ENCODE measurements at regions of chr10 and their contacts with region 1.

Region 1: GRCh38 chr10:89217057-89217990 is 10.2 kb upstream of the CH25H start:
- DNase-seq: peak in 3 of 5 donors; percentile 40 to 58 (median 47)
- ATAC-seq: peak in 2 of 4 donors; percentile 25 to 55
- H3K4me3 ChIP-seq: no peak overlapping the region
- H3K27ac ChIP-seq: peak overlapping the region in 10 of 12 donors; percentile 6 to 64 (median 34)
- H3K4me1 ChIP-seq: peaks cover 0 to 19% (median 7%) of the 10 kb centered on the region in 12 donors
- H3K27me3 ChIP-seq: no peaks in the 10 kb centered on the region
- CTCF ChIP-seq: peak; percentile 71 to 87 (median 81)
- POLR2A ChIP-seq: no peak

Region 2: DNA sequence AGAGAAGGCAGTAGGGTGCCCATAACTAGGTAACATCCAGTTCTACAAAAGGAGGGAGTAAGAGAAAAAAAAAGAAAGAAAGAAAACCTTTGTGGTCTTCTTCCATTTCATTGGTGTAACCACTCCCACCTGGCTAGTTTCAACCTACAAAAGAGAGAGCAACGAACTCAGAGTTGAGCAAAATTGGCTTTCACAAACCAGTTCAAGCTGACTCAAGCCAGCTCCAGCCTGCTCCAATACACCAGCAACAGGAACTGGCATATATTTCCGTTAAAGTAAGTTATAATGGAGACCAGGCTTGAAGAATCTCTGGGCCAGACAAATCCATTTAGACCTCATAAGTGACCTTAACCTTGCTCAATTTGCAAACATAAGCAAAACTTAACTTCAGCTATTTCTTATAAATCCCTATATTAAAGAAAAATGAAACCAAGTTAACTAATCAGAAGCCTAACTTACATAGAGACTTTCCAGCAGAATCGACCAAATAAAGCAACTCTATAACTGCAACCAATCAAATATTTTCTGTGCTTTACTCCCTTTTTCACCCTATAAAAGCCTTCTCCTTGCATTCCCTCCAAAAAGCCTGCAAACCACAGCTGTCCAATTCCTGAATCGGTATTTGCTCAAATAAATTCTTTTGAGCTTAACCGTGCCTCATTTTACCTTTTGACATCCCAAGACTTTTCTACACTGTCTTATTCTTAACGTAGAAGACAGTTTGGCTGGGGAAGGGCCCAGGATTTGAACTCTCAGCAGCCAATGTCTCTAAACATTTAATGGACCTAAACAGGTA is 375.8 kb before region 1 on chr10:
- intact Hi-C with region 1: loop called in 9 of 10 experiments (anchors 5 kb)
- DNase-seq: no peak
- ATAC-seq: no peak
- H3K4me3 ChIP-seq: no peak overlapping the region
- H3K27ac ChIP-seq: peak overlapping the region in 1 of 12 donors; percentile 71
- H3K4me1 ChIP-seq: peaks cover 0 to 15% (median 0%) of the 10 kb centered on the region in 12 donors
- H3K27me3 ChIP-seq: no peaks in the 10 kb centered on the region
- CTCF ChIP-seq: no peak
- POLR2A ChIP-seq: no peak

Region 3: GRCh38 chr10:88941026-88941425 is 276.3 kb before region 1 on chr10:
- intact Hi-C with region 1: loop called in 5 of 10 experiments (anchors 2 to 5 kb)
- DNase-seq: no peak
- ATAC-seq: no peak
- H3K4me3 ChIP-seq: no peak overlapping the region
- H3K27ac ChIP-seq: peak overlapping the region in 1 of 12 donors; percentile 78
- H3K4me1 ChIP-seq: peaks cover 0 to 16% (median 0%) of the 10 kb centered on the region in 12 donors
- H3K27me3 ChIP-seq: no peaks in the 10 kb centered on the region
- CTCF ChIP-seq: no peak
- POLR2A ChIP-seq: no peak

Region 4: DNA sequence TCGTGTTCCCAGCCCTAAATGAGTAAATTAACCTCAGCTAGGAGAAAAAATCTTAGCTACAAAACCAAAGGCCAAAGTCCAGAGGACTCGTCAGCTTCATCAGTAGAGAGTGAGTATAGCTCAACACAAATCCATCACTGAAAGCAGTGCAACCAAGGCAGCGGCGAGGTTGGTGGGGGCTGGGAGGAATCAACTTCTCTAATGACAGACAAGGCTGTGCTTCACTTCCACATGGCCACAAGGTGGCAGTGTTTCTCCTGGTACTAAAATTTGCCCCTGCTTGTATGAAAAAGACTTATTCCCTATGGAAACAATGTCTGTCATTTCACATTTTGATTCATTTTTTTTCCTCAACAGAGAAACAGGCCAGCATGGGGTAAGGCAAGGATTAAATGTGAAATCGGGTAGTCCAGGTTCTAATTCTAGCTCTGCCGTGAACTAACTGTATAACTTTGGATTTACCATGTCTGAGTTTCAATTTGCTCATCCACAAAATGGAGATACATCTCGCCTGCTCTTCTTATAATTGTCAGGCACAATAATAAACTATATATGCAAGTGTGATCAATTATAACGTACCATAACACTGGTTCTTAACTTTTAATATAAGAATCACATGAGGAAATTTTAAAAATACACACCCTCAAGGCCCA is 187.4 kb before region 1 on chr10:
- intact Hi-C with region 1: loop called in 9 of 10 experiments (anchors 1 to 2 kb)
- DNase-seq: peak; percentile 79 to 83 (median 80)
- ATAC-seq: peak in 3 of 4 donors; percentile 64 to 76 (median 71)
- H3K4me3 ChIP-seq: peak overlapping the region in 1 of 12 donors; percentile 21
- H3K27ac ChIP-seq: peak overlapping the region in 2 of 12 donors; percentile 9 to 27
- H3K4me1 ChIP-seq: peaks cover 0 to 35% (median 8%) of the 10 kb centered on the region in 12 donors
- H3K27me3 ChIP-seq: no peaks in the 10 kb centered on the region
- CTCF ChIP-seq: peak; percentile 87 to 97 (median 94)
- POLR2A ChIP-seq: no peak

Region 5: DNA sequence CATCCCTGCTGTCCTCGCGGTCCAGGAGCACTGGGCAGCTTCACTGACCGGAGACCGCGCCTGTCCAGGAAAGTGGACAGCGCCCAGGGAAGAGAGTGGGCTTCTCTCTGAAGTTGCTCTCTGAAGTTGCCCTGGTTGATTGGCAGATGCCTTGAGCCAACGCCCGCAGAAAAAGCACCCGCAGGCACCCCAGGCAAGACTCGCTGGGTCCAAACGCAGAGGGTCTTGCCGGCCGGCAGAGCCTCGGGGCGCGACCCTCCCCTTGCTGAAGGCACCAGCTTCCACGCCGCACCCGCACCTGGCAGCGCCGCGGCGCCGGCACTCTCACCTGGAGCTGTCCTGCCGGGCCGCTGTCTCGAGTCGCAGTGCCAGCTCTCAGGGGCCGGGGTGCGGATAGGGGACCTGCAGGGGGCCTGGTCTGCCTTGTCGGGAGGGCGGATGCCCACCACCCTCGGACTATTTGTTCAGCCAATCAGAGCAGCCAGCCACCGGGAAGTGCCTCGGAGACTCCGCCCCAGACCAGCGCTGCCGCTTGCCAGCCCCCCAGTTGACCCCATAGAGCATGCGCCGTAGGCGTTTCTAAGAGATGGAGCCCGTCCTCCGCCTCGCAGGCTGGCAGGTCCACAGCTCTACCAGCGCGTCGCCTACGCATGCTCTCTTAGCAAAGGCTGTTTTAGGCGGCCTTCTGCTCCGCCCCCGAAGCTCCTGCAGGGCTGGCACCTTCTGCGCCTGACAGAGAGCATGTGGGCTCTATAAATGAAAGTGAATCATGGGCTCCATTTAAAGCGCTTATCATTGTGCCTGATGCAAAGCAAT is 34.3 kb after region 1 on chr10 and contains the start of gene LIPA:
- intact Hi-C with region 1: no loop called
- DNase-seq: peak; percentile 96 to 98 (median 97)
- ATAC-seq: peak; percentile 99 to 100 (median 99)
- H3K4me3 ChIP-seq: peak within 1 kb of the TSS; percentile 70 to 99 (median 88)
- H3K27ac ChIP-seq: peak within 1 kb of the TSS in 11 of 12 donors; percentile 68 to 90 (median 82)
- H3K4me1 ChIP-seq: peaks cover 0 to 36% (median 7%) of the 10 kb centered on the region in 12 donors
- H3K27me3 ChIP-seq: no peaks in the 10 kb centered on the region
- CTCF ChIP-seq: no peak
- POLR2A ChIP-seq: peak in 1 of 2 donors; percentile 54
- total RNA-seq, gene LIPA: 13.6 to 127 (median 18.8) TPM

Region 6: DNA sequence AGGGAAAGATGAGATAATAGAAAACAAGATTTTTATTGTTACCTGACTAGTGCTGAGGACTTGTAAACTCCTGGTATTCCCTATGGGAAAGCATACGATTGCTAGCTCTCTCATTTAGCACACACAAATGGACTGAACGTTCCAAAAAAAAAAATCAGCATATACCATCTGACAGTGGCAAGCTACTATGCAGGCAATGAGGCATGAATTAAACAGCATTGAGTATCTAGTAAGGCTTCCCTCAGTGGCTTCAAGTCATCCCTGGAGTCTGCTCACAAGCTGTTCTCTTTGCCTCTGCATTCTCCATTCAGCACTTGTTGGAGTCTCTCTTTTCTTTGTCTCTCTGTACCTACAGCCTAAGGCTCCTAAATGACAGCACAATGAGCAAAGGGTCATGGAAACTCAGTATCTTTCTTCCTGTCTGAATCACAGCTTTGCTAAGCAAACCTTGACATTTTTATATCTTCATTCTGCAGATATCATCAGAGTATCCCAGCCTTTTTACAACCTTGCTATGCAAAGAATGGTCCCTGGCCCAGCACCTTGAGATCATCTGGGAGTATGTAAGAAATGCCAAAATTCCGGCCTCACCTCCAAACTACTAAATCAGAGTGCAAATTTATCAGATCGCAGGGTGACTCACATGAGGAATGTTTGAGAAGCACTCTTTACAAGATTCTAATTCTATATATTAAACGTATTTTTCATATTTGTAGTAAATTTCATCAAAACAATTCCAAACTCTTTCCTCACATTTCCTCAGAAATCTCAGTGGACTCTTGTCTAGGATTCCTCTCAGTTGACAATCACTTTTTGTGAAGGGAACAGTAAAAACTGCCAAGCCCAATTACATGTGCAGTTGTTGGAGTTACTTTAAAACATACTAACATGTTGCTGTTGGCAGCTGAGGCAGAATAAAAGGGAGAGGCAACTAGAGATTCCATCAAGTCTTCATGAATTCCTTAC is 45.0 kb after region 1 on chr10:
- intact Hi-C with region 1: no loop called
- DNase-seq: no peak
- ATAC-seq: no peak
- H3K4me3 ChIP-seq: no peak overlapping the region
- H3K27ac ChIP-seq: peak overlapping the region in 3 of 12 donors; percentile 7 to 24 (median 9)
- H3K4me1 ChIP-seq: peaks cover 0 to 29% (median 12%) of the 10 kb centered on the region in 12 donors
- H3K27me3 ChIP-seq: no peaks in the 10 kb centered on the region
- CTCF ChIP-seq: no peak
- POLR2A ChIP-seq: no peak